K562 (cell line): ENCODE measurements at regions of chr1 and their contacts with region 1.

Region 1: DNA sequence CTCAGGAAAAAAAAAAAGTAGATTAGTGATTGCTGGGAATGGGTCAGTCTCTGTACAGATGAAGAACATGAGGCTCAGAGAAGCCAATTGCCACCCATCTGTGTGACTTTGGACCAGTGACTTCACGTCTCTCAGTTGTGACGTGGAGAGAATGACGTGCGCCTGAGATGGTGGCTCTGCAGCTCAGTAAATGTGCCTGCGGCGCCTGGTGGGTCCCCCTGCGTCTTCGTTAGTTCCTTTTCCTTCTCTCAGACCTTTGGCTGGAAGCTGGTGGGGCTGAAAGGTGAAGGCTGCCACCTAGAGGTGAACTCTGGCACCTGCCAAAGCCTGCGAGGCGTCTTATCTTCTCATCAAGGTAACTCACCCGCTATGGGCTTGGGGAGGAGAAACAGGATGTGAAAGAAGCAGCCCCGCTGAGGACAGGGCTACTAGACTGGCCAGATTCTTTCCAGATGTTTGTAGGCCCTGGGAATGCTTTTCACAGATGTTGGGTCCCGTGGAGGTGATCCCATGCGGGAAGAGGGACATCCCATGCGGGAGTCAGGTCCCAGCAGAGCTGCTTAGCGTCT is 8.7 kb upstream of the E2F2 start:
- DNase-seq: peak; percentile 94 to 98 (median 96)
- ATAC-seq: peak; percentile 98
- H3K4me3 ChIP-seq: 0 out of 2 replicates have a peak overlapping the region, but pooled peaks have one; percentile 7
- H3K27ac ChIP-seq: peak overlapping the region; percentile 37; the same call in 1 of the 3 replicates
- H3K4me1 ChIP-seq: peaks cover 7 to 8% of the 10 kb centered on the region in 2 experiments; a peak in 4 of 5 replicates
- H3K27me3 ChIP-seq: no peaks in the 10 kb centered on the region
- CTCF ChIP-seq: peak; percentile 97 to 100 (median 99)
- EP300 ChIP-seq: peak; percentile 77
- POLR2A ChIP-seq: no peak; the same call in 1 of the 2 replicates
- RAD21 ChIP-seq: peak; percentile 100

Region 2: DNA sequence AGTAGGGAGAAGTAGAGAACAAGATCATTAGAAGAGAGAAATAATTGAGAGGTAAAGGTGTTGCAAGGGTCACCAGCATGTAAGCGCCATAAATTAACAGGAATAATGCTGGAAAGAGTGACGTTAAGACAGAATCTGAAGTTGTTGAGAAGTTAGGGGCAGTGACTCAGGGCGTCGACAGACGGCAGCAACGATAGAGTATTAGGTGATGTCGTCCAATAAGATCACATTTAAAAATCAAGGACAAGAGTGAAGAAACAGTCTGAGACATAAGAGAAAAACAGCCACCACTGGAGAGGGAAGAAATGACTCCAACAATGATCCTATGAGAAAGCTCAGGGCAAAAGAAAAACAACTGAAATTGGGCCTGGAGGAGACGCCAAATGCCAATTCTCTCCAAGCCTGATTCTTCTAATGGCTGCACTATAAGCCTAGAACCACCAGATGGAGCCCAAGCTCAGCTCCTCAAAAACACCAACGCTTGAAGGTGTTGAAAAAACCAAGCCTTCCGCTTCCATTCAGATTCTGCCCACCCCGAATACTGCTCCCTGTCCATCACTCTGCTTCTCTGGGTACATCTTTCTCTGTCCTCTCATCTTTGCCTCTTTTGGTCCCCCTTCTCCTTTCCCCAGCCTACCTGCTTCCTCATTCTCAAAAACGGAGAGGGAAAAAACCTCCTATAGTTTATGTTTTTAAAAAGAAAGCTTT is 441.2 kb before region 1 on chr1:
- CTCF ChIA-PET with region 1: interaction called, 8 read pairs
- POLR2A ChIA-PET with region 1: no interaction called
- in situ Hi-C with region 1: no loop called
- intact Hi-C with region 1: loop called (anchors 5 kb)
- DNase-seq: peak; percentile 73 to 84 (median 75)
- ATAC-seq: peak; percentile 85
- H3K4me3 ChIP-seq: no peak overlapping the region
- H3K27ac ChIP-seq: no peak overlapping the region
- H3K4me1 ChIP-seq: peaks cover 0 to 24% of the 10 kb centered on the region in 2 experiments; a peak in 4 of 5 replicates
- H3K27me3 ChIP-seq: no peaks in the 10 kb centered on the region
- CTCF ChIP-seq: peak; percentile 93 to 99 (median 97)
- EP300 ChIP-seq: no peak
- POLR2A ChIP-seq: no peak
- RAD21 ChIP-seq: peak; percentile 98 to 100

Region 3: DNA sequence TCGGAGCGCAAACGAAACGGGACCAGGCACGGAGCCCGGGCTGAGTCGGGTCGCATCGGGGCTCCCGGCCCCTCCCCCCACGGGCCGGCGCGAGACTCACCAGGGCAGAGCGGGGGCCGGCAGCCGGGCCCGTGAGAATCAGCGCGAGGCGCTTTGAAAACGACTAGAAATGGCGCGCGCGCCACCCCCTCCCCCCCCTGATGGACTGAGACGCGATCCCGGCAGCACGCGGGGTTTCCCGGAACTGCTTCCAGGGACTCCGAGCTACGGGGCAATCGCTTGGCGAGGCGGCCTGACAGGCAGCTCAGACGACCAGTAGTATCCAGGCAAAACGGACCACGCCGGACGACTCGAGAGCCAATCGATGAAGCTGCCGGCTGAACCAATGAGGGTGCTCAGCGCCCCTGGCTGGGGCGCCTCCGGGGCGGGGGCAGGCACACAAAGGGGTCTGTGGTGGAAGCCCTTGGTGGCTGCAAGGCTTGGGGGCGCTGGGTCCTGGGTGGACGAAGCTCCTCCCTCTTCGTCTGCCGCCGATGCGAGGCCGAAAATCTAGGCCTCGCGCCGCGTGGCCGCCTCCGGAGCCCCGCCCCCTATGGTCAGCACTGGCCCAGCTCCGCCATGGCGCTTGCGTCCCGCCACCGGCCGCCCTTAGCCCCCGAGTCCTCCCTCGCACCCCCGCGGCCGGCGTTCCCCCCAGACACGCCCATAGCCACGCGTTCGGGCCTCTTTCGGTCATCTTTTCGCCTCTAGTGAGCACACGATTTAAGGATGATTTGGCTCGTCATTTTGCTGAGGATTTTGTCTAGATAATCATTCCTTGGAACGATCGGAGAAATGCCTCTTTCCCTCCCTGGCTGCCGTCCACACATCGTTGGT is 195.4 kb before region 1 on chr1 and contains the start of gene HNRNPR:
- CTCF ChIA-PET with region 1: no interaction called
- POLR2A ChIA-PET with region 1: interaction called, 5 read pairs
- in situ Hi-C with region 1: no loop called
- intact Hi-C with region 1: loop called (anchors 10 kb)
- DNase-seq: peak; percentile 99 to 100 (median 100)
- ATAC-seq: peak; percentile 93
- H3K4me3 ChIP-seq: peak within 1 kb of the TSS; percentile 76
- H3K27ac ChIP-seq: peak within 1 kb of the TSS; percentile 99
- H3K4me1 ChIP-seq: peaks cover 15 to 26% of the 10 kb centered on the region in 2 experiments; a peak in 4 of 5 replicates
- H3K27me3 ChIP-seq: no peaks in the 10 kb centered on the region
- CTCF ChIP-seq: 0 out of 6 replicates have a peak, but pooled peaks of 1 of the 3 experiments have one; percentile 9
- EP300 ChIP-seq: no peak; the same call in 1 of the 2 replicates
- POLR2A ChIP-seq: peak; percentile 92
- RAD21 ChIP-seq: no peak; a peak in 1 of 4 replicates
- polyA plus RNA-seq, gene HNRNPR: 80.9 to 93.4 TPM

Region 4: GRCh38 chr1:23496490-23497181 is 43.1 kb before region 1 on chr1:
- CTCF ChIA-PET with region 1: interaction called, 25 read pairs
- POLR2A ChIA-PET with region 1: interaction called, 5 read pairs
- in situ Hi-C with region 1: loop called (anchors 5 kb)
- intact Hi-C with region 1: loop called (anchors 1 kb)
- DNase-seq: no peak
- ATAC-seq: peak; percentile 46
- H3K4me3 ChIP-seq: no peak overlapping the region
- H3K27ac ChIP-seq: no peak overlapping the region
- H3K4me1 ChIP-seq: peaks cover 0 to 4% of the 10 kb centered on the region in 2 experiments; a peak in 1 of 5 replicates
- H3K27me3 ChIP-seq: no peaks in the 10 kb centered on the region
- CTCF ChIP-seq: no peak
- EP300 ChIP-seq: no peak
- POLR2A ChIP-seq: no peak
- RAD21 ChIP-seq: no peak

Region 5: GRCh38 chr1:23514111-23514679 is 25.6 kb before region 1 on chr1:
- CTCF ChIA-PET with region 1: no interaction called
- POLR2A ChIA-PET with region 1: no interaction called
- in situ Hi-C with region 1: no loop called
- intact Hi-C with region 1: no loop called
- DNase-seq: peak; percentile 48 to 82 (median 64)
- ATAC-seq: no peak; the same call in 2 of the 3 replicates
- H3K4me3 ChIP-seq: no peak overlapping the region
- H3K27ac ChIP-seq: no peak overlapping the region
- H3K4me1 ChIP-seq: no peaks in the 10 kb centered on the region; a peak in 3 of 5 replicates
- H3K27me3 ChIP-seq: no peaks in the 10 kb centered on the region
- CTCF ChIP-seq: no peak
- EP300 ChIP-seq: no peak
- POLR2A ChIP-seq: no peak
- RAD21 ChIP-seq: no peak

Region 6: GRCh38 chr1:23664837-23665795 is 125.3 kb after region 1 on chr1:
- CTCF ChIA-PET with region 1: interaction called, 52 read pairs
- POLR2A ChIA-PET with region 1: no interaction called
- in situ Hi-C with region 1: no loop called
- intact Hi-C with region 1: loop called (anchors 1 kb)
- DNase-seq: peak in 2 of 4 experiments; percentile 55 to 62
- ATAC-seq: peak; percentile 80
- H3K4me3 ChIP-seq: no peak overlapping the region
- H3K27ac ChIP-seq: no peak overlapping the region
- H3K4me1 ChIP-seq: peaks cover 0 to 4% of the 10 kb centered on the region in 2 experiments; a peak in 2 of 5 replicates
- H3K27me3 ChIP-seq: peaks cover 4 to 18% of the 10 kb centered on the region in 2 experiments
- CTCF ChIP-seq: peak; percentile 65 to 72 (median 68)
- EP300 ChIP-seq: no peak
- POLR2A ChIP-seq: no peak
- RAD21 ChIP-seq: peak; percentile 34 to 52